Activated naive CD4-positive, alpha-beta T cell treated with anti-CD3 and anti-CD28 coated beads, Interleukin-2, amount 10 ng/mL, durations not matched to agents 7 days and 5 days (primary cell): ENCODE measurements at regions of chr6 and their contacts with region 1.

Region 1: GRCh38 chr6:149431905-149432775 is 32.1 kb downstream of the SUMO4 start:
- DNase-seq: peak; percentile 93
- H3K4me3 Mint-ChIP-seq: peak overlapping the region; percentile 37
- H3K27ac Mint-ChIP-seq: no peak overlapping the region
- H3K4me1 Mint-ChIP-seq: peaks cover 22% of the 10 kb centered on the region
- H3K27me3 Mint-ChIP-seq: no peaks in the 10 kb centered on the region

Region 2: DNA sequence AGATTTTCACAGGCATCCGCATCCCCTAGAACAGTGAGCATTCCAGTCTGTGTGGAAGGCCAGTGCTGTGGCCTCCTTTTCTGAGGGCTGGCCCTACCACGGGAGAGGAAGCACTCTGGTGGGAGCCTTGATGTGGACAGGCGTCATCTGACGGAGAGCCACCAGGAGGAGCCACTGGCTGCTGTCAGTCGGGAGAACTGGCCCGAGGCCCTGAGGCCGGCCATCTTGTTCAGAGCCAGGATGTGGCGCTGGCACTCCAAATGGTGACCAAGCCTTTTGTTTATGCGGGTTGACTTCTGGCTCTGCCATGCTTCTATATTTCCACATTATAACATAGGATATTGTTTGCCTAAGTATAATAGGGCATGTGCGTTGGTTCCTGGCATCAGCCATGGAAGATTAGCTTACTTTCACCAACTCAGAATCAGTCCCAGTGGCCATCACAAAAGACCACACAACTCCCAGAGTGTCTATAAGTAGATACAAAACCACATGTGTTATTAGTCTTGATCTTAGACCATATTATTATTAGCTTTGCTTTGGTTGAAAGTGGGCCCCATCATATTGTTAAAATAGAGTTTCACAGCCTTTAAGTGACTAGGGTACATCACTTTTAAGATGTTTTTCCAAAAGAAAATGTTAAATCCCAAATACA is 388.5 kb before region 1 on chr6:
- CTCF ChIA-PET with region 1: interaction called, 31 read pairs
- DNase-seq: peak; percentile 35
- H3K4me3 Mint-ChIP-seq: no peak overlapping the region
- H3K27ac Mint-ChIP-seq: no peak overlapping the region
- H3K4me1 Mint-ChIP-seq: peaks cover 54% of the 10 kb centered on the region
- H3K27me3 Mint-ChIP-seq: no peaks in the 10 kb centered on the region

Region 3: DNA sequence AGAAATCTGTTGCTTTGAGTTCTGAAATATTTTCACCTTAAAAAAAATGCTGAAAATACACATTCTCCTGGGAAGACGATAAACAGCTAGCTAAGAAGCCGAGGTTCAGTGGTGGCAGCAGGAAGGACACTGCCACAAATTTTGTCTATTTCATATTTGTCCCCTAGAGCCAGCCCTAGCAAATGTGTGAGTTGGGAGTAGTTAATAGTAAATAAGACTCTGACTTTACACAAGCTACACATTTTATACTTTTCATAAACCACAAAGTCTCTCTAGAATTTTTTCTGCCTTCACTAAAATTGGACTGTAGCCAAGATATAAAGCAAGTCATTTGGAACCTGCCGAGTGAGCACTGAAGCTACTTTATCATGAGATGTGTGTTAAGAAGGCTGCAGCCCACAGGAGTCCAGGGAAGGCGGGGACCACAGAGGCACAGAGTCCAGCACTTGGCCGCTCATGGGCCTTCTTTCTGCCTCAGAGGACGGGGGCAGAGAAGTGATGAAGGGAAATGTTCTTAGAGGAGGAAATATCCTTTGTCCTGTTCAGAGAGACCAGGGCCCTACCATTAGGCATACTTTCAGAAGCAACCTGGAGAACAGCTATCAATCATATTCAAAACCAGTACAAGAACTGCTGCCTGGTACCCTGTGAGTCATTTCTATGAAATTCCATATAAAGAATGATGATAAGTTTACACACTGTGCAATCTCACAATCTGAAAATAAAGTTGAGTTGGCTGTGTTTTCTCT is 356.4 kb before region 1 on chr6:
- CTCF ChIA-PET with region 1: interaction called, 19 read pairs
- DNase-seq: no peak
- H3K4me3 Mint-ChIP-seq: no peak overlapping the region
- H3K27ac Mint-ChIP-seq: no peak overlapping the region
- H3K4me1 Mint-ChIP-seq: peaks cover 46% of the 10 kb centered on the region
- H3K27me3 Mint-ChIP-seq: no peaks in the 10 kb centered on the region

Region 4: GRCh38 chr6:149306967-149307366 is 125.2 kb before region 1 on chr6:
- CTCF ChIA-PET with region 1: no interaction called
- DNase-seq: no peak
- H3K4me3 Mint-ChIP-seq: no peak overlapping the region
- H3K27ac Mint-ChIP-seq: no peak overlapping the region
- H3K4me1 Mint-ChIP-seq: no peaks in the 10 kb centered on the region
- H3K27me3 Mint-ChIP-seq: peaks cover 4% of the 10 kb centered on the region

Region 5: DNA sequence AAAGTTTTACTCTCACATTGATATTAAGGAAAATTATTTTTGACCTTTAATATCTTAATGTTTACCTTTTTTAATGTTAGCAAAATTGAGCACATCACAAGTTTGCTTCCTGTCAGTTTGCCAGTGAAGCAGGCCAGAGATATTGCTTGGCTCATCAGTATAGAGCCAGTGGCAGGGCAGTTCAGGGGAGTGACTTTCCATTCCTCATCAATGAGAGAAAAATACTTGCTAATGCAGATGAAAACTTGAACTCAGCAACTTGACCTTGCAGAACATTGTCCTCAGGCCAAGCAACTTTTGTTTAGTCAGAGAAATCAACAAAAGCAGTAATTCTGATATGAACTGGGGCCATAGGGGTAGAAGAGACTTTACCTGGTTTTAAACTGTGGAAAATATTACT is 107.7 kb before region 1 on chr6:
- CTCF ChIA-PET with region 1: interaction called, 10 read pairs
- DNase-seq: no peak
- H3K4me3 Mint-ChIP-seq: peak overlapping the region; percentile 49
- H3K27ac Mint-ChIP-seq: peak overlapping the region; percentile 81
- H3K4me1 Mint-ChIP-seq: peaks cover 87% of the 10 kb centered on the region
- H3K27me3 Mint-ChIP-seq: no peaks in the 10 kb centered on the region

Region 6: DNA sequence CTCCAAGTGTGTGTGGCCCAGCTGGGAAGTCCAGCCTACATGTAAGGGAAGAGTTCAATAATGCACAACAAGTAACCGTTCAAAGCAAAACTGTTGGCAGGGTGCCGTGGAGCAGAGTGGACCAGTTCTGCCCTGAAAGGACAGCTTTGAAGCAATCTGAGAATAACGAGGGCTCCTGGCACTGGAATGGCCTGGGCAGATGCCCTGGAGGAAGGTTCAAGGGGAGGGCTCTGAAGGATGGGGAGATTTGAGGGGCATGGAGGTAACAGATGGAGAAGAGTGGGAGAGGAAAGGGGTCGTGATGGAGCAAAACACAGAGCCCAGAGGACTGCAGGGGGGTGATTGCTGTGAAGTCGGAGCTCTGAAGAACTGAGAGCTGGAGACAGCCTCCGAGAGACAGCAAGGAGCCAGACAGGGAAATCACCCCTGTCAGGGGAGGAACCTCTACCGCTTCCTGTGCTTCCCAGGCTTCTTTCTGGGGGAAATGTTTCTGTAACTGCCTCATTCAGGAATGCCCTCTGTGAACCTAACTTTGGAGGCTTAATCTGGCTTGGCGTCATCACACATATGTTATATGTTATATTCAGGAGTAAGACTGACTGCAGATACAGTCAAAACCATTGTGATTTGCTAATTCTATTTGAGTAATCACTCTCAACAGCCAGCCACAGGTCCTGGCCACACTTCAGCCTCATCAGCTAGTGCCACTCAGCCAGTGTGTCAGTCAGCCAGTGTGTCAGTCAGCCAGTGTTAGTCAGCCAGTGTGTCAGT is 11.5 kb after region 1 on chr6:
- CTCF ChIA-PET with region 1: interaction called, 31 read pairs
- DNase-seq: no peak
- H3K4me3 Mint-ChIP-seq: no peak overlapping the region
- H3K27ac Mint-ChIP-seq: no peak overlapping the region
- H3K4me1 Mint-ChIP-seq: no peaks in the 10 kb centered on the region
- H3K27me3 Mint-ChIP-seq: peaks cover 3% of the 10 kb centered on the region

Region 7: DNA sequence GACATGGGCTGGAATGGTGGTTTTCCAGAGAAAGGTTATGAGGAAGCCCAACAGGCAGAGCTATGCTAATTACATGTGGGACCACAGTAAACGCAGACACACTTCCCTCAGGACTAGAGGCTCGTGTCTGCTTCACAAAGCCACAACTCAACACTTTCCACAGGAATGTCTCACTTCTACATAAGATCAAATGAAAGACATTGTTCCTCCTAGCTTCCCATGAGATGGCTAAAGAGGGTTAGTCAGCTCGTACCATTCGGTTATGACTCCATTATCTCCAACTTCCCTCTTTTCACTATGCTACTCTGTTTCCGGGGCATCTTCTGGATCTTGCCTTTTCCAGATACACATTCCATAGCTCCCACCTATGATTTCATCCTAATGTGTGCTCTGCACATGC is 81.8 kb after region 1 on chr6:
- CTCF ChIA-PET with region 1: interaction called, 47 read pairs
- DNase-seq: no peak
- H3K4me3 Mint-ChIP-seq: no peak overlapping the region
- H3K27ac Mint-ChIP-seq: no peak overlapping the region
- H3K4me1 Mint-ChIP-seq: peaks cover 23% of the 10 kb centered on the region
- H3K27me3 Mint-ChIP-seq: no peaks in the 10 kb centered on the region